ENCODE measurements at regions of chr11 and their contacts with region 1.

Region 1: DNA sequence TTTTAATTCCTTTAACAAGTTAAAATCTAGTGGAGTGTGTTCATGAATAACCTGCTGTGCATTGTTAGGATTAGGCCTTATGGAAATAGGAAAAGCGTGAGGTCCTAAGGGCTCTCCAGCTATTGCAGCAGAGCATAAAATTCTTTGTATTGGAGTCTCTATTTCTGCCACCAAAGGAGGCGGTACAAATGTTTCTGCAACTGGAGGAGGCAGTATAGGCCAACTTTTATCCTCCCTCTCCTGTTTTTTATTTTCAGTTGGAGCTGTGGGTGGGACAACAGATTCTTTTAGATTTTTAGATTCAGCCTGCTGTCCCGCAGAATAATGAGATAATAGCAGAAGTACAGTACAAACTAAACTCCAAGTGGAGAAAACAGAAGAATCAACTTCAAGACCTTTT is 26.2 kb downstream of the OR10A6 start:
- DNase-seq: peak; percentile 75
- H3K4me3 ChIP-seq: peak overlapping the region; percentile 34
- H3K27ac ChIP-seq: peak overlapping the region; percentile 31
- H3K4me1 ChIP-seq: peaks cover 54% of the 10 kb centered on the region
- H3K27me3 ChIP-seq: no peaks in the 10 kb centered on the region

Region 2: DNA sequence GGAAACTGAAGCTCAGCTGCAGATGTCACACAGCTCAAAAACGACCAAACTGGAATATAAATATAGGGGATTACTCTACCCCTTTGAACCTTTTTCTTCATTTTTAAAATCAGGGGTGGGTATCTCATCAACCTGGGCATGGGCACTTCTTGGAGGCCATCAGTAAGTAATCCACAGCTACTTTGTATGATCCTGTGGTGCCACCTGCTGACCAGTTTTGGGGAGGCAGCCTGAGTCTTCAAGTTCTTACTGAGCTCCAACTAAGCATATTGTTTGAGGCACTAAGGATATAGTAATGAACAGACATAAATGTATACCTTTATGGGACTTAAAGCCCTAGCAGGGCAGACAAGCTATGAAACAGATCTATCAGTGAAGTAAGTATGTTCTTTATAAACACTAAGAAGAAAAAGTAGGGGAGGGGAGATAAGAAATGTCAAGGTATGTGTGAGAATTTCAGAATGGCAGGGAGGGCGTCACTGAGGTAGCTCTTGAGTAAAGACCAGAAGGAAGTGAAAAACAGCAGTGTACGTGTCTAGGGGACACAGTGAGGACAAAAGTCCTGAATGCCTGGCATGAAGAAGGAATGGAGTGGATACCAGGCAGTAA is 194.5 kb after region 1 on chr11:
- in situ Hi-C with region 1: loop called (anchors 10 kb)
- DNase-seq: peak; percentile 76
- H3K4me3 ChIP-seq: no peak overlapping the region
- H3K27ac ChIP-seq: peak overlapping the region; percentile 81
- H3K4me1 ChIP-seq: peaks cover 20% of the 10 kb centered on the region
- H3K27me3 ChIP-seq: no peaks in the 10 kb centered on the region

Region 3: GRCh38 chr11:8477680-8478079 is 572.8 kb after region 1 on chr11:
- in situ Hi-C with region 1: no loop called
- DNase-seq: no peak
- H3K4me3 ChIP-seq: no peak overlapping the region
- H3K27ac ChIP-seq: no peak overlapping the region
- H3K4me1 ChIP-seq: no peaks in the 10 kb centered on the region
- H3K27me3 ChIP-seq: peaks cover 15% of the 10 kb centered on the region; the same call in 1 of the 2 replicates